ENCODE measurements at regions of chr19 and their contacts with region 1.

Region 1: GRCh38 chr19:48571378-48572162 is 19.6 kb downstream of the SULT2B1 start:
- DNase-seq: no peak
- ATAC-seq: no peak
- H3K4me3 ChIP-seq: no peak overlapping the region
- H3K4me3 Mint-ChIP-seq: no peak overlapping the region
- H3K27ac ChIP-seq: no peak overlapping the region
- H3K27ac Mint-ChIP-seq: no peak overlapping the region
- H3K4me1 ChIP-seq: no peaks in the 10 kb centered on the region
- H3K4me1 Mint-ChIP-seq: peaks cover 0 to 2% (median 2%) of the 10 kb centered on the region in 3 donors
- H3K27me3 ChIP-seq: peaks cover 0 to 7% of the 10 kb centered on the region in 2 experiments
- H3K27me3 Mint-ChIP-seq: peaks cover 6 to 9% of the 10 kb centered on the region in 2 donors

Region 2: GRCh38 chr19:48524728-48525127 is 46.8 kb before region 1 on chr19:
- CTCF ChIA-PET with region 1: no interaction called
- POLR2A ChIA-PET with region 1: interaction called in 1 of 2 experiments, 19 read pairs
- DNase-seq: no peak
- ATAC-seq: no peak
- H3K4me3 ChIP-seq: no peak overlapping the region
- H3K4me3 Mint-ChIP-seq: no peak overlapping the region
- H3K27ac ChIP-seq: no peak overlapping the region
- H3K27ac Mint-ChIP-seq: no peak overlapping the region
- H3K4me1 ChIP-seq: no peaks in the 10 kb centered on the region
- H3K4me1 Mint-ChIP-seq: no peaks in the 10 kb centered on the region
- H3K27me3 ChIP-seq: peaks cover 0 to 16% of the 10 kb centered on the region in 2 experiments
- H3K27me3 Mint-ChIP-seq: peaks cover 4 to 5% of the 10 kb centered on the region in 2 donors

Region 3: DNA sequence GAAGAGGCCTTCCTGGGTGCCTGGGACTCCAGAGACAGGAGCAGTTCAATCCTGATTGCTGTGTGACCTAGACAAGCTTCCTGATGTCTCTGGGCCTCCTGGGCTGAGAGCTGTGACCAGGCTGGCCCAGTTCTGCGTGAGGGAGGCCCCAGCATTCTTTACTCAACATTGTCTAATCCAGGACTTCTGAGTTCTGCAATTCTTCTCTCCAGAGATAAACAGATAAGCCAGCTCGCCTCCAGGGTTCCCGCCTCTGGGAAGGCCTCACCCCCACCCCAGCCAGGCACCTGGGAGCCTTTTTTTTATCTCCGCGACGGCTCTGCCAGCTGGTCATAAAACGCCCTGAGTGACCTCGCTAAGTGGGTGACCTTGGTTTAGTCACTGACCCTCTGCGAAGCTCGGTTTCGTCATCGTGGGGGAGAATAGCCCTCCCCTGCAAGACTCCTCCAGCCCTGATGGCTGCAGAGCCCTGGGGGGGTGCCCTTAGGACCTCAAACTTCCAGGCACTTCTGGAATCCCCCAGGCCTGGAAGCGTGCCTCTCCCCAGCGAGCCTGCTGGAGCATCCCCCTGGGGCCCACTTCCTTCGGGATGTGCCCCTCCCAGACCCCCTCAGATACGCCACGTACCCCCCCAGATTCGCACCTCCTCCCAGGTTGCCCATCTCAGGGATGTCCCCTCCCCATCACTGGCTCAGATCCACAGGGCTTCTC is 17.7 kb before region 1 on chr19:
- CTCF ChIA-PET with region 1: no interaction called
- POLR2A ChIA-PET with region 1: no interaction called
- DNase-seq: no peak
- ATAC-seq: no peak
- H3K4me3 ChIP-seq: no peak overlapping the region
- H3K4me3 Mint-ChIP-seq: no peak overlapping the region
- H3K27ac ChIP-seq: no peak overlapping the region
- H3K27ac Mint-ChIP-seq: no peak overlapping the region
- H3K4me1 ChIP-seq: peaks cover 0 to 4% of the 10 kb centered on the region in 2 experiments
- H3K4me1 Mint-ChIP-seq: peaks cover 0 to 3% (median 2%) of the 10 kb centered on the region in 3 donors
- H3K27me3 ChIP-seq: peaks cover 0 to 53% of the 10 kb centered on the region in 2 experiments
- H3K27me3 Mint-ChIP-seq: peaks cover 4 to 14% of the 10 kb centered on the region in 2 donors